Right cardiac atrium (tissue), 5 donors: ENCODE measurements at regions of chr17 and their contacts with region 1.

Region 1: GRCh38 chr17:61927200-61928165 is at the start of gene INTS2:
- DNase-seq: peak; percentile 97 to 99 (median 99)
- ATAC-seq: peak; percentile 98 to 99
- H3K4me3 ChIP-seq: peak within 1 kb of the TSS; percentile 61
- H3K27ac ChIP-seq: peak within 1 kb of the TSS; percentile 69
- H3K4me1 ChIP-seq: peaks cover 2% of the 10 kb centered on the region
- H3K27me3 ChIP-seq: no peaks in the 10 kb centered on the region
- total RNA-seq, gene INTS2: 9.2 to 11.6 (median 10.6) TPM

Region 2: DNA sequence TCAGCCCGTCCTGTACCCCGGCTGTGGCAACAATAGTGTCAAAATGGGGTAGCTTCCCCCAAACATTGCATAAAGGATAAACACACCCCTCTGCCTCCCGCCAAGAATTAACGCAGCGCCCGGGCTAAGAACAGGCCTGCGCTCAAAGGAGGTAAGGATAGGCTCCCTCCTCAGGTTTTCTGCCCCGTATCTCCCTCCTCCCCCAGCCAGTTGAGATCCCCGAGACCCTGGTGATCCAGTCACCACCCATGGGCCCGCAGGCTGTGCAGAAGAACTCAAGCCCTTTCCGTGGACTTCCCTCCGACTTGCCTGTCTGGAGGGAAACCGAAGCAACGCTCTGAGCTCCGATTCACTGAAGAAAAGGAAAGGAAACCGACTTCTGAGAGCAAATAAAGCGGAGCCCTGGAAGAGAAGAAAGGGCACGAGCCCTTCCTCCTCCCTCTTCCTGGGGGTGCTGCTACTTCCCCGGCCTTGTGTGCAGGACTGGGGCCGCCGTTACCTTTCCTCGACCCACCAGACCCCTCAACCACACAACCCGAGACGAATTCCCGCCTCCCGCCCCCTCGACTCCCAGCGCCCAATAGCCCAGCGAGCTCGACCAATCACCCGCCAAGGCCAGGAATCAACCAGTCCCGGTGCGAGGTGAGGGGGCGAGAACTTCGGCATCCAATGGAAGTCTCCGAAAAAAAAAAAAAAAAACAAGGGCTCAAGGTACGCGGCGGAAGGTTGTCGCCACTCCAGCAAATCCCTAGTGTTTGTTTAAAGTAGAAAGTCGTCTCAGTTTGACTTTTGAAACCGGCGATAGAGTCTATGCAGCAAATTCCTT is 64.3 kb before region 1 on chr17 and contains the start of gene BRIP1:
- intact Hi-C with region 1: no loop called
- DNase-seq: peak; percentile 91 to 96 (median 94)
- ATAC-seq: peak; percentile 100
- H3K4me3 ChIP-seq: peak within 1 kb of the TSS; percentile 80
- H3K27ac ChIP-seq: peak within 1 kb of the TSS; percentile 55
- H3K4me1 ChIP-seq: no peaks in the 10 kb centered on the region
- H3K27me3 ChIP-seq: no peaks in the 10 kb centered on the region
- total RNA-seq, gene BRIP1: 0.11 to 0.41 (median 0.29) TPM in 3 of 4 donors, not detected in the other

Region 3: DNA sequence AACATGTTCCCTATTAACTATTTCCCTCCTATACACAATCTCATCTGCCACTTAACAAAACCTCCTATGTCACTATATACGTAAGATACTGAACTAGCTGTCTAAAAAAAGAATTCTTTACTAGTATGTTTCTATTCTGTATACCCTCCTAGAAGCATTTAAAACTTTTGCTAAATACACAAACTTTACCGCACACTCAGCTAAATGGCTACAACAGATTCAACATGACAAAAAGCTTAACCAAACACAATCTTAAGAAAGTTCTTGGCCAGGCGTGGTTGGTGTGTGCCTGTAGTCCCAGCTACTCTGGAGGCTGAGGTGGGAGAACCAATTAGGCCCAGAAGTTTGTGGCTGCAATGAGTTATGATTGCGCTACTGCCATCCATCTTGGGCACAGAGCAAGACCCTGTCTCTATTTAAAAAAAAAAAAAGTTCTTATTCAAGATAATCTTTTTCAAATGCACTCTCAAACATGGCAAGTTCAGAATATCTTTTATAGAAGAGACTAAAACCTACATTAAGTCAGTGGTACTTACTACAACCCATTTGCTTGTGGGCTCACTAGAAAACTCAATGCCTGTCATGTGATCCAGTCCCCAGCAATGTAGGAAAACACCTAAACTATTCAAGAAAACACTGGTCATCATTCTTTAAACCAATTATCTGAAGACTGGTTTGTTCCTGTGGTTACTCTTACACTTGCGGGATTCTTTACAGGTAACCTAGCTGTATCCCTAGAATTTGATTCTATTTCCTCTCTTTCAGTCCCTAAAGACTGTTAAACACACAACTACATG is 117.8 kb after region 1 on chr17:
- intact Hi-C with region 1: no loop called
- DNase-seq: no peak
- ATAC-seq: no peak
- H3K4me3 ChIP-seq: no peak overlapping the region
- H3K27ac ChIP-seq: no peak overlapping the region
- H3K4me1 ChIP-seq: peaks cover 5% of the 10 kb centered on the region
- H3K27me3 ChIP-seq: no peaks in the 10 kb centered on the region

Region 4: DNA sequence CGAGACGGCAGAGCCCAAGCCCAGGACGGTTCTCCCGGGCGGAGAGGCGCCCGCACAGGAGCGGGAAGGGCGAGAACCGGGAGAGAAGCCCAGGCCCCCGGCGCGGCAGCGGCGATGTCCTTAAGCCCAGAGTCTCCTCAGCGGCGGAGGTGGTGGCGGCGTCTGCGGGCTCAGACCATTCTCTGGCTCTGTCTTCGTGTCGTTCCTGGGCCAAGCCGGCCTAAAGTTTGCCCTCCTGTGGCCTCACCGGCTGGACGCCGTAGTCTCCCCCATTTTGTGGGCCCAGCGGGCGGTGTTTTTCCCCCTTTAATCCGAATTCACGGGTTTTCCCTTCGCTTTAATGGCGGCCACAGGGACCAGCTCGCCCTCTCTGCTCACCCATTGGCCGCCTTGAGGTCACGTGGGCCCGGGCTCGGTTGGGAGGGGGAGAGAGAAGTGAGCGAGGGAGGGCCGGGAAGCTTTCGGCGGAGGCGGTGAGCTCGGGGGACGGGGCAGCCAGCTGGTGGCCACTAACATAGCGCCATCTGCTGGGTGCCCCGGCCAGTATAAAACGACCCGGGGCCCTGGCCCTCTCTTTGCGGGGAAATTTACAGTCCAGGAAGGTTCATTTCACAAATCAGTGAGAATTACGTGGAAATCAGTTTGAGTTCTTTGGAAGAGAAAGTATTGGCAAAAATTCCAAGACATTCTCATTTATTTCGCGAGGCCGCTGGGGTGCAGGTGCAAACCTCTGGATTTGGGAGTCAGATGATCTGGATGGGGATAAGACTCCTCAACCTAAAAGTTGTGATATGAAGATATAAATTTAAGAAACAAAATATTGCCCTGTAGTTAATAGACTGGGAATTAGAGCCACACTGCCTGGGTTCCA is 138.3 kb after region 1 on chr17:
- intact Hi-C with region 1: loop called in 1 of 4 experiments (anchors 10 kb)
- DNase-seq: peak; percentile 99 to 100 (median 99)
- ATAC-seq: peak; percentile 100
- H3K4me3 ChIP-seq: peak overlapping the region; percentile 97
- H3K27ac ChIP-seq: peak overlapping the region; percentile 100
- H3K4me1 ChIP-seq: no peaks in the 10 kb centered on the region
- H3K27me3 ChIP-seq: no peaks in the 10 kb centered on the region